ENCODE measurements at regions of chr15 and their contacts with region 1.

Region 1: DNA sequence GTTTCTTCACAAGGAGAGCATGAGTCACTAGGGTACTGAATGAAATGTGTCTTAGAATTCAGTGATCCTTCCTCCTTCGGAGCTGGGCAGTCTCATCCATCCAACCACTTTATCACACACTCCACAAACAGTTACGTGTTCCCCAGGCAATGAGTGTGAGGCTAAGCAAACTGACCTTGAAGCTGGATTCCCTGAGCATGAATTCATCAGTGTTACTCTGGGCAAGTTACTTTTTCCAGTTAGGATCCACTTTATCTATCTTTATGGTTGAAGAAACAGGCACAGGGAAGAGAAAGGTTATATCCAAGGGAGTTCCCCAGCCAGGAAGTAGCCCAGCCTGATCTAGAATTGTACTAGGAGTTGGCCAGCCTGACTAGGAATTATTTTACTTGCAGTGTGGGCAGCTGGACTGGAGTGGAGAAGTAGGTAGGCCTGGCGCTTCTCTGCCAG is 17.1 kb upstream of the GCNT3 start:
- DNase-seq: peak; percentile 54
- H3K27ac ChIP-seq: no peak overlapping the region
- CTCF ChIP-seq: no peak

Region 2: DNA sequence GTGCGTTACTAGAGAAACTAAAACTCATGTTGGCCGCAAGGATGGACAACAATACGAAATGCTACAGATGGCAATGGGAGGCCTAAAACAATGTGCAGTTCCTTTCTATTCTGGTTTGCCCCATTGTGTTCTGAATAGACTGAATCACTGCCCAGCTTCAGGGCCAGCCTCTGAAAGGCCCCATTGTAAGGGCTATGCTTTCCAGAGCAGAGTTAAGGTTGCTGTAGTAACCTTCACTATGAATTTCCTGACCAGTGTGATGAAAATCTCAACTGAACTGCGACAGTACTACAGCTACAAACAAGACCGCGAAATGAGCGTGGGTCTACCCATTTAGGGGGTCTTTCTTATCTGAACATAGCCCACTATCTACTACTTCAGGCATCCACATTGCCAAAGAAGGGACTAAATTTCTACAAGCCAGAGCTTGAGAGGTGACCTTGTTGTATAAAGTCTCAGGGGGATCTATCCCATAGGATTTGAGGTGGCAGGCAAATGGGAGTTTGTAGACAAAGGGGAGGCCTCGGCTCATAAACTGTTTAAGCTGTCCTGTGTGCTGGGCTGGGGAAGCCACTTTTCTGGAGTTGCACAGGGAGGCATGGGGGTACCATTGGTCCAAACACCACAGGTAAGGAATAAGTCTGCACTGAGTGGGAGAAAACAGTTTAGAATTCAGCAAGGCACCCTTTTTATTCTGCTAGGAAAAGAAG is 301.9 kb before region 1 on chr15:
- CTCF ChIA-PET with region 1: no interaction called
- POLR2A ChIA-PET with region 1: interaction called, 12 read pairs
- DNase-seq: no peak
- H3K27ac ChIP-seq: no peak overlapping the region
- CTCF ChIP-seq: no peak

Region 3: GRCh38 chr15:59349680-59350420 is 244.7 kb before region 1 on chr15:
- CTCF ChIA-PET with region 1: no interaction called
- POLR2A ChIA-PET with region 1: no interaction called
- DNase-seq: peak; percentile 96
- H3K27ac ChIP-seq: peak overlapping the region; percentile 84; the same call in 1 of the 2 replicates
- CTCF ChIP-seq: no peak

Region 4: DNA sequence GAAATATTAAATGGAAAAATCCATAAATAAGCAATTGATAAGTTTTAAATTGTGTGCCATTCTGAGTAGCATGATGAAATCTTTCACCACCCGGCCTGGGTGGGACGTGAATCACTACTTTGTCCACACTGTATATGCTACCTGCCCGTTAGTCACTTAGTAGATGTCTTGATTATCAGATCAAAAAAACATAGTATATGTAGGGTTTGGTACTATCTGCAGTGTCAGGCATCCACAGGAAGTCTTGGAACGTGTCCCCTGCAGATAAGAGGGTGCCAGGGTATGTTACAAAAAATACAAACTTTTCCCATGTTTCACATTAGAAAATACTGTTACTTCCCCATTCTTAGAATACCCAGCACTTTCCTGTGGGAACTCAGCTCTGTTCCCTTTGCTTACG is 121.3 kb before region 1 on chr15:
- CTCF ChIA-PET with region 1: no interaction called
- POLR2A ChIA-PET with region 1: no interaction called
- DNase-seq: no peak
- H3K27ac ChIP-seq: no peak overlapping the region
- CTCF ChIP-seq: no peak

Region 5: DNA sequence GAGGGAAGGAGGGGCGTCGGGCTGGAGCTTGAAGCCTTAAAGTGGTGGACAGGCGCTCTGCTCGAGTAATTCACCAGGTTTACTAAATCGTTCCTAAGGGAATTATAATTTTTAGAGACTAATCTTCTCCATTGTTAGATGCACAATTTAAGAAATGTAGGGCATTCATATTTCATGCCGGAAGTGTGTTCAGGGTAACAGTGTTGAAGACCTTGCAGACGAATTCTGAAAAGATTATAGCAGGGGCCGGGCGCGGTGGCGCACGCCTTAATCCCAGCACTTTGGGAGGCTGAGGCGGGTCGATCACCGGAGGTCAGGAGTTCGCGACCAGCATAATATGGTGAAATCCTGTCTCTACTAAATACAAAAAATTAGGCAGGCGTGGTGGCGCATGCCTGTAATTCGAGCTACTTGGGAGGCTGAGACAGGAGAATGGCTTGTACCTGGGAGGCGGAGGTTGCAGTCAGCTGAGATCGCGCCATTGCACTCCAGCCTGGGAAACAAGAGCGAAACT is 63.2 kb after region 1 on chr15:
- CTCF ChIA-PET with region 1: no interaction called
- POLR2A ChIA-PET with region 1: no interaction called
- DNase-seq: no peak
- H3K27ac ChIP-seq: peak overlapping the region; percentile 79
- CTCF ChIP-seq: no peak

Measured in RWPE1 (cell line).